Activated T-helper 2 cell treated with anti-CD3 and anti-CD28 coated beads, Interferon-gamma antibody, Interleukin-2, Interleukin-4, amounts not matched to agents 10 μg/mL and 5 μg/mL and 100 μg/mL, durations not matched to agents 14 hours and 24 hours and 36 hours (primary cell): ENCODE measurements at regions of chr3 and their contacts with region 1.

Region 1: GRCh38 chr3:134485718-134486576 is at the starts of genes ANAPC13 and CEP63:
- DNase-seq: peak; percentile 92
- H3K4me3 Mint-ChIP-seq: peak within 1 kb of the TSS; percentile 97
- H3K27ac Mint-ChIP-seq: peak within 1 kb of the TSS; percentile 99
- H3K4me1 Mint-ChIP-seq: peaks cover 37% of the 10 kb centered on the region
- H3K27me3 Mint-ChIP-seq: no peaks in the 10 kb centered on the region
- total RNA-seq, gene ANAPC13: 27.3 and 27.4 TPM in 2 replicates
- total RNA-seq, gene CEP63: 18.0 and 20.1 TPM in 2 replicates

Region 2: DNA sequence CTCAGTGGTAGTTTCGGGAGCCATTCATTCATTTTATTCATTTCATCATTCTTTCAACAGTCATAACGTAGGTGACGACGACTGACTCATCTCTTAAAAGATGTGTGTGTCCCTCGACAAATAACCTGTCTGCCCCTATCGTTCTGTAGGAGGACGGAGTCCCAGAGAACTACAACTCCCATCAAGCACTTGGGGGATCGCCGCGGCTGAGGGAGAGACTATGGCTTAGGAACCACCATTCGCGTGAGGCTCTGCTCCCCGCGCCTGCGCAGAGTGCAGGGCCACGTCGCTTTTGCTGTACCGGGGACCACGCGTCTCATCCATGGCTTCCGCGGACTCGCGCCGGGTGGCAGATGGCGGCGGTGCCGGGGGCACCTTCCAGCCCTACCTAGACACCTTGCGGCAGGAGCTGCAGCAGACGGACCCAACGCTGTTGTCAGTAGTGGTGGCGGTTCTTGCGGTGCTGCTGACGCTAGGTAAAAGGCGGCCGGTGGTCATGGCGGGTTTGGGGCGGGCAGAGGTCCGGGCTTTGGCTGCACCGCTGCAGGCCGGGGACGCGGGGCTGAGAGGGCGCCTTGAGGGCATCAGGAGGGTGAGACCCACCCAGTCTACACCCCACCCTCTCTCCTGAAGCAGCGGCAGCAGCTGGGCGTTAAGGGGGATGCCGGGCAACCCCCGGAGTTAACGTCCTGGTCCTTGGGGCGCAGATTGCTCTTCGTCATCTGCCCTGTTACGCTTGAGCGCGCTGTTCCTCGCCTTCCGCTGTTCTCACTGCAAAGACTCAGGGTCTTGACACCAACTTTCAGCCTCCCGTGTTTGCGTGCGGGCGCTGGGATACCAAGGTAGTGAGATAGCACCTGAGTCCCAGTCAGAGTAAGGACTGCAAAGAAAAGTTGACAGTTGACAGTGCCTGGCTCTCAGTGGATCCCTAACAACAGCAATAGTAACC is 680.1 kb before region 1 on chr3 and contains the start of gene SRPRB:
- intact Hi-C with region 1: loop called (anchors 2 kb)
- DNase-seq: peak; percentile 94
- H3K4me3 Mint-ChIP-seq: peak within 1 kb of the TSS; percentile 94
- H3K27ac Mint-ChIP-seq: peak within 1 kb of the TSS; percentile 90
- H3K4me1 Mint-ChIP-seq: peaks cover 17% of the 10 kb centered on the region
- H3K27me3 Mint-ChIP-seq: peaks cover 9% of the 10 kb centered on the region
- total RNA-seq, gene SRPRB: 91.5 and 92.1 TPM in 2 replicates

Region 3: GRCh38 chr3:134197681-134198261 is 288.2 kb before region 1 on chr3:
- intact Hi-C with region 1: loop called (anchors 5 kb)
- DNase-seq: no peak
- H3K4me3 Mint-ChIP-seq: no peak overlapping the region
- H3K27ac Mint-ChIP-seq: no peak overlapping the region
- H3K4me1 Mint-ChIP-seq: peaks cover 7% of the 10 kb centered on the region
- H3K27me3 Mint-ChIP-seq: no peaks in the 10 kb centered on the region

Region 4: DNA sequence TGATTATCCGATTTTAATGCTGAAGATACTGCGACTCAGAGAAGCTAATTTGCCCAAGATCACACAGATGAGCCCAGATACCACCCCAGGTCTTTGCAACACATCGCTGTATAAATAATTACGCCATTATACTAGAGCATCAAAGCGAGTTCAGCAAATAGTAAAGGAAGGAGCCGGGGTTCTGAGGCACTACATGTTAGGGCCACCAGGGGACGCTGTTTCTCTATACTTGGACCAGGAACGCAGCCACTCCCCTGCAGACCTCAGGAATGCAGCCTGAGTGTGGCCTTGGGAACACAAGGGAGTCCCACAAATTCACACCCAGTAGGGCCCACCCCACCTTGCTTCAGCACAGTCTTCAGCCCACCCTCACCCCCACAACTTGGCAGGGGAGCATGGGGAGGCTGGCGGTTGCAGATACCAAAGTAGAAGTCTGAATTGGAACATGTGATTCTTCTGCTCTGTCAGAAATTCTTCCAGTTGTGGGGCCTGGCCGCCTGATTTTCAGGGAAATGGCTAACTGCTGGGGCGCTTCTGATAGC is 177.5 kb before region 1 on chr3:
- intact Hi-C with region 1: loop called (anchors 5 kb)
- DNase-seq: peak; percentile 49
- H3K4me3 Mint-ChIP-seq: no peak overlapping the region
- H3K27ac Mint-ChIP-seq: no peak overlapping the region
- H3K4me1 Mint-ChIP-seq: peaks cover 2% of the 10 kb centered on the region
- H3K27me3 Mint-ChIP-seq: peaks cover 64% of the 10 kb centered on the region

Region 5: GRCh38 chr3:134590766-134591165 is 104.8 kb after region 1 on chr3:
- intact Hi-C with region 1: no loop called
- DNase-seq: no peak
- H3K4me3 Mint-ChIP-seq: no peak overlapping the region
- H3K27ac Mint-ChIP-seq: no peak overlapping the region
- H3K4me1 Mint-ChIP-seq: no peaks in the 10 kb centered on the region
- H3K27me3 Mint-ChIP-seq: peaks cover 3% of the 10 kb centered on the region